Endothelial cell of umbilical vein (primary cell): ENCODE measurements at regions of chr15 and their contacts with region 1.

Region 1: DNA sequence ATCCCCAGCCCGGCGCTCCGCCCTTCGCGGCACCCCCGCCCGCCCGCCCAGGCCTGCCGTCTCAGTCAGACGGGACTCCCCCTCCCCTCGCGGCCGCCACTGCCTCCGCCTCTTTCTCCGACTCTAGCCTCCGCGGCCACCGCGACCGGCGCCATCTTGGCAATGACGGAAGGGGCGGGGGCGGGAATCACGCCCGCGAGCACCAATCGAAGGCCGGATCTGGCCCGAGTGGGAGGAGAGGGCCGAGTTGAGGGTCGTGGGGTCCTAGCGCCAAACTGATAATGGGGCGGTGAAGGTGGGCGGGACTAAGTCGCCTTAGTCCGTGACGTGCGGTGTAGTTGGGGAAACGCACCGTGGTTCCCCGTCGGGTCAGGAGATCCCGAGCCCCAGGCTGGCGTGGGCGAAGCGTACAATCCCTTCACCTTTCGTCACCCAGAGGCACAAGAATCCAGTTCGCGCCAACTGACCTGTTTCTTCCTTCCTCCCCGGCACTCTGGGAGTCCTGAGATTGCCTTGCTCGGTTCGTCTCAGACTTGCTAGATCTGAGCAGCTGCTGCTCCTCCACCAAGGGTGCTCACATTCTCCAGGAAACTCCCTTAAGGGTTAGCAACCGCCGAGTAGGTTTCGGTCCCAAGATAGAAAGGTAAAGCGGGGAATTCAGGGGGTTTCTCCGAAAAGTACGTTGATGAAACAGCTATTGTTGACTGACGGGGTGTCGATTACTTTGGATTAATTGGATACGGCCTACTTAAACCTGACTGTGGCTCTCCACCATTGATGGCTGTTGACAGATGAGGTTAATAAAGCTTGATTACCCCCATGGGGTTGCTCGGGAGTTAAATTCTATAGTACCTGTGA is at the start of gene DENND4A:
- DNase-seq: peak; percentile 99
- H3K4me3 ChIP-seq: peak within 1 kb of the TSS; percentile 85 to 91 (median 89)
- H3K27ac ChIP-seq: peak within 1 kb of the TSS; percentile 81
- H3K4me1 ChIP-seq: peaks cover 40% of the 10 kb centered on the region
- H3K27me3 ChIP-seq: no peaks in the 10 kb centered on the region
- CTCF ChIP-seq: no peak
- POLR2A ChIP-seq: peak; percentile 84
- total RNA-seq, gene DENND4A: 22.2 and 25.2 TPM in 2 replicates

Region 2: GRCh38 chr15:65421360-65422070 is 370.8 kb before region 1 on chr15:
- CTCF ChIA-PET with region 1: no interaction called
- POLR2A ChIA-PET with region 1: no interaction called
- dilution Hi-C with region 1: no loop called
- intact Hi-C with region 1: no loop called
- DNase-seq: no peak
- H3K4me3 ChIP-seq: peak overlapping the region in 1 of 3 experiments; percentile 14
- H3K27ac ChIP-seq: no peak overlapping the region
- H3K4me1 ChIP-seq: peaks cover 9% of the 10 kb centered on the region
- H3K27me3 ChIP-seq: peaks cover 37 to 43% of the 10 kb centered on the region in 2 experiments
- CTCF ChIP-seq: no peak
- POLR2A ChIP-seq: no peak

Region 3: GRCh38 chr15:65730549-65731172 is 61.7 kb before region 1 on chr15:
- CTCF ChIA-PET with region 1: no interaction called
- POLR2A ChIA-PET with region 1: no interaction called
- dilution Hi-C with region 1: no loop called
- intact Hi-C with region 1: loop called (anchors 5 kb)
- DNase-seq: peak; percentile 10
- H3K4me3 ChIP-seq: no peak overlapping the region
- H3K27ac ChIP-seq: no peak overlapping the region
- H3K4me1 ChIP-seq: no peaks in the 10 kb centered on the region
- H3K27me3 ChIP-seq: no peaks in the 10 kb centered on the region
- CTCF ChIP-seq: no peak
- POLR2A ChIP-seq: no peak

Region 4: DNA sequence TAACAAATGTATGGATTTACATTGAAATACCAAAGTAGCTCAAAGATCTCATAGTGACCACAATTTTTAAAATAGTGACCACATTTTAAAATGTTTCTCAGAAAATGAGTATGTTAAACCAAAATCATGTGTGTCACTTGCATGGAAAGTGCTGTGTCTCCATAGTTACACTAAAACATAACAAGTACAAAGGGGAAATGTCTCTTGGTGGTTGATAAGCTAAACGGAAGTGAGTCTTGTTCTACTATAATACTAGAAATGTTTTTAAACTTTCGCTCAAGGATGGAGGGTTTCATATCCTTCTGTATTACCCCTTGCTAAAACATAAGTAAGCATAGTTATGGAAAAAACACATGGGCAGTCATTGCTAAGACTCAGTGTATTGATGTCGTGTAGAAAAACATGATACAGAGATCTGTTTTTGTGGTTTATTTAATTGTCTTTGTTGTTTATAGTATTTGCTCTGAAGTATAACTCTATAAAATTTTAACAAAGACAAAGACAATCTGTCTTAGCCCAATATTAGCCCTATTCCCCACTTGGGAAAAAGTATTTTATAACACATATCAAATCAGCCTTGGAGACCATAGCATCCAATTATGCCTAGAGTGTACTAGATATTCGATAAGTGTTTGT is 26.7 kb after region 1 on chr15:
- CTCF ChIA-PET with region 1: interaction called, 29 read pairs
- POLR2A ChIA-PET with region 1: no interaction called
- dilution Hi-C with region 1: no loop called
- intact Hi-C with region 1: loop called (anchors 1 kb)
- DNase-seq: peak; percentile 95
- H3K4me3 ChIP-seq: no peak overlapping the region
- H3K27ac ChIP-seq: peak overlapping the region; percentile 88
- H3K4me1 ChIP-seq: peaks cover 20% of the 10 kb centered on the region
- H3K27me3 ChIP-seq: no peaks in the 10 kb centered on the region
- CTCF ChIP-seq: no peak
- POLR2A ChIP-seq: no peak